ENCODE measurements at regions of chr21 and their contacts with region 1.

Region 1: DNA sequence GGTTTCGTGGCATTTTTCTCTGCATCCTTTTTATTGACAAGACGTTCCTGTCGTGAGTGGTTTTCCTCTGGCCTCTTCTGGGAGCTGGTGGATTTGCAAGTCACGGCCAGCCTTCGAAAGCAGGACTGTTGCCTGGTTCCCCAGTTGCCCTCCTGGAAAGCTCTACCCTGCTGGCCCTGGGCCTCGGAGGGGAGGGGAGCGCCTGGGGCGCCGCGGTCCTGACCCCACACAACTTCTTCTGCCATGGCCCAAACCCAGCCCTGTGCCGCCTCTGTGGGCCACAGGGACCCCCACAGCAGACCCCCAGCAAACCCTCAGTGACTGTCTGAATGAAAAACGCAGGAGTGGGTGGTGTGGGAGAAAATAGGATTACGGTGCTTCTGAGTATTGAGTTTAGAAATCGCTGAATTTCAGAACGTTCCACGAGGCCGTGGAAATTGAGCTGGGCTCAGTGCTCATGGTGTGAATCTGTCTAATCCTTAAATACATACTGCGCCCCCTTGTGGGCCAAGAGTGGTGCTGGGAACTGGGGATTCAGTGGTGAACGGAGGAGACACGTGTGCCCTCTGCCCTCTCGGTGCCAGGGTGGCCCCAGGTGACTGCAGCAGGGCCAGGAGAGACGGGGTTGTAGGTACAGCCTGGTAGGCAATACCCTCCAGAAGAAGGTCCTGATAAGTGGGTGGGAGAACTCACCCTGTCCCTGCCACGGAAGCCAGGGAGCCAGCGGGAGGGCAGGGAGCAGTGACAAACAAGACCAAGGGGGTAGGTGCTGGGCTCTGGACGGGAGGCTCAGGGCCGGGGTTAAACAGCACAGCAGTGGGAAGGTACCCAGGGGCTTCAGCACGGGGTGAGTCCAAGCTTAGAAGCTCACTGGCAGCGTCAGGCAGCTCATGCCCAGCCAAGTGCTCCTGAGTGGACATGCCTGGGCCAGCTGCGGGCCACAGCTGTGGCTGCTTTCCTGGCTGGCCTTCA is 101.2 kb upstream of the COL6A1 start:
- DNase-seq: peak; percentile 88
- ATAC-seq: peak; percentile 73

Region 2: DNA sequence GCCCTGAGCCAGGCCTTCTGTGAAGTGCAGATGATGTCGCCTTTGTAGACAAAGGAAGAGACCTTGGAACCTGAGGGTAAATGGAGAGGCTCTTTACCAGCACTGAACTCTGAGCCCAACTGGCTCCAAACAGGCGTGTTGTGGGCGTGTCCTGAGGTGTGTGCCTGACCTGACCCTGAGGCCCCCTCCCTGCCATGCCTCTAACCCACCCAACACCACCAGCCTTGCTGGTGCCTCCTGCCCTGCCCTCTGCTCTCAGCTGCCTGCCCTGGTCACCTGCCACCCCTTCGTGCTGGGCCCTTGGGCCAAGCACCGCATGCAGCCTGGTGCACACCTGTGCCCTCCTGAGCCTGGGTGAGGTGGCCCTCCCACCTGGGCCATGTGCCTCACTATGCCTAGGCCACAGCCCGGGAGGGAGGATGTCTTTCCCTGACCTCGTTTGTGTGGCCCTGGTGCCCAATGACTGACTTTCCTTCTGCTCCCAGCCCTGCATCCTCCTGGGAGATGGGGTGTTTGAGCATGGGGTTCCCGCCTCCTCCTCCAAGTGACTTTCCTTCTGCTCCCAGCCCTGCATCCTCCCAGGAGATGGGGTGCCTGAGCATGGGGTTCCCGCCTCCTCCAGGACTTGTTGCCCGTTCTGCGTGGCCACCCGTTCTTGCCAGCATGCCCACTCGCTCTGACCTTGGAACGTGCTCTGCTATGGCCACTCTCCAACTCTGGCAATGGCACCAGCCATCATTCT is 79.9 kb before region 1 on chr21:
- intact Hi-C with region 1: no loop called
- DNase-seq: no peak
- ATAC-seq: no peak

Region 3: DNA sequence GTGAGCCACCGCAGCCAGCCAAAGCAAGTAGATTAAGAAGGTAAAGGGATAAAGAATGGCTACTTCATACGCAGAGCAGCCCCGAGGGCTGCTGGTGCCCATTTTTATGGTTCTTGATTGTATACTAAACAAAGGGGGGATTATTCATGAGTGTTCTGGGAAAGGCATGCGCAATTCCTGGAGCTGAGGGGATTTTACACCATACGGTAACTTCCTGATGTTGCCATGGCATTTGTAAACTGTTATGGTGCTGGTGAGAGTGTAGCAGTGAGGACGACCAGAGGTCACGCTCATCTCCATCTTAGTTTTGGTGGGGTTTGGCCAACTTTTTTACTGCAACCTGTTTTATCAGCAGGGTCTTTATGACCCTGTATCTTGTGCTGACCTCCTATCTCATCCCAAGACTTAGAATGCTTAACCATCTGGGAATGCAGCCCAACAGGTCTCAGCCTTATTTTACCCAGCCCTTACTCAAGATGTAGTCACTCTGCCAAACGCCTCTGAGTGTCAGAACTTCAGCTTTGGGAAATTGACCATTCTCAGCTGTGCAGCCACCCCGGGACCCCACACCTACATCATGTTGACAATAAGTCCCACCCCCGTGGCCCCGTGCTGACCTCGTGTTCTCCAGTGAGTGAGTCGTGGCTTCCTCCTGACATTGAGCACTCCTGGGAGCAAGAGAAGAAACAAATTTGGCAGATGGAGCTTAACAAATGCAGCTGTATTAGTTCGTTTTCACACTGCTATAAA is 48.2 kb before region 1 on chr21:
- intact Hi-C with region 1: loop called (anchors 5 kb)
- DNase-seq: peak; percentile 64
- ATAC-seq: peak; percentile 33

Region 4: GRCh38 chr21:45846373-45847160 is 33.8 kb before region 1 on chr21:
- intact Hi-C with region 1: no loop called
- DNase-seq: peak; percentile 69
- ATAC-seq: peak; percentile 84

Region 5: DNA sequence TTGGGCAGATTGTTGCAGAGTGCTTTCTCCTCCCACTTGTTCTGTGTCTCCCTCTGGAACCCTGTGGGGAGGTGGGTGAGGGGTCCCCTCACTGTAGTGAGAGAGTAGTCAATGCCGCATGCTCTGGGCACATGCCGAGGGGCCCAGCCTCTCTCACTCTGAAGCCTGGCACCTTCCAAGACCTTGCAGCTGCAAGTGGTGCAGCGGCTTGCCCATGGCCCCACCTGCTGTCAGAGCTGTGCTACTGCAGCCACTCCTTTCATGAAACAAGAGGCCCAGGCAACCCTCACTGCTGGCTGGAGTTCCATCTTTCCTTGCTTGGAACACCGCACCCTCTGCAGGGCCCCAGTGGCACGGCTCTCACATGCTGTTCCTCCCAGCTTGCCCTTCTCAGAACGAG is 42.8 kb after region 1 on chr21:
- intact Hi-C with region 1: loop called (anchors 2 kb)
- DNase-seq: no peak
- ATAC-seq: peak; percentile 94

Region 6: GRCh38 chr21:46060596-46061061 is 180.2 kb after region 1 on chr21:
- intact Hi-C with region 1: no loop called
- DNase-seq: peak; percentile 71
- ATAC-seq: peak; percentile 62

Region 7: DNA sequence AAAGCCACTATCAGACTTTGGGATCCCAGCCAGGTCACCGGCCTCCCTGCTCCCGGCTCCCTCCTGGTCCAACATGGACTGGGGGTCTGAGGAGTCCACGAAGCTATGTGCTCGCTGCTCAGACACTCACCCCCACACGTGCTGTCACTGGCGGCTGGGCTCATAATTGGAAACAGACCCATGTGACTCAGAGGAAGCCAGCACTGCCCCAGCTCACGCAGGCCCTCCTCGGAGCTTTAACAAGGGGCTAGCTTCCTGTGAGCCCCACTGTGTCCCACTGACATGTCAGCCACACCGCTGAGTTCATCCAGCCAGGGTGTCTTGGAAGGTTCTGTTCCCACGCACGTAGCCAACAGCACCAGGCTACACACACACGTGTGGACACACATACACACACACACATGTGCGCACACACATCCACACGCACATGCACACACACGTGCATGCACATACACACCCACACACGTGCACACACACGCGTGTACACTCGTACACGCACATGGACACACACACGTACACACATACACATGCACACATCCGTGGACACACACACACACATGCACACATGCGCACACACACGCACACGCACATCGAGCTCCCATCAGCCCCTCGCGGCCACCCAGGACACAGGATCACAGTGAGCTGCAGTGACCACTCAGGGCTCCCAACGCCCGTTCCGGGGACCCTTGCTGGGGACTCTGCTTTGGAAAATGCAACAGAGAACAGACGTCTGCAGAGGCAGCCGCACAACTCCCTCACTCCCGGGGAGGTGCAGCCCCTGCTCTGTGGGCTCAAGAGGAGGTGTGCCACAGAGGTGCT is 199.2 kb after region 1 on chr21:
- intact Hi-C with region 1: no loop called
- DNase-seq: no peak
- ATAC-seq: peak; percentile 55